Calu3 (cell line): ENCODE measurements at regions of chr13 and their contacts with region 1.

Region 1: DNA sequence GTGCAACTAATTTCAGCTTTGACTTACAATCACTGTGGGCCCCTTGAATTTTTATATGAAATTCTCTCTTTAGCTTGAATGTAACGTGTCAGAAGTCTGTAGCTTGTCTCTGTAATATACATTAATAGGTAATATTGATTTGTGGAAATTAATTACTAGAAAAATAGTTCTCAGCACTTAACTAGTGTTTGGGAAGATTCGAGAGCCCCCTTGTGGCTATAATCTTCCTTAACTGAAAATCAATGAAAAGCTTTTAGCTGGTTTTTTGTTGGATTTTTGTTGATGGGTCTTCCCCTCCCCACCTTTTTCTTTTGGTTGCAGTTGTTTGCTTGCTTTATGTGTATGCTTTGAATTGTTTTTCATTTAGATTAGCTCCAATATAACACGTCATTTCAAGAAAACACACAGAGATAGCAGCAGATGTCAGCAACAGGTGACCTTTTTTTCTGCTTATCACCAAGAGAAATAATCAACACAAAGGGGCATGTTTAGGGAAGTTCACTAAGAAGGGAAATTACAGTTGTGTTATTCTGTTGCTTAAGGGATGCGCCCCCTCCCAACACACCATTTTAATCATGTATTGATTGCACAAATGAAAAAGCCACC is 176.8 kb downstream of the OXGR1 start:
- DNase-seq: no peak
- H3K4me3 Mint-ChIP-seq: no peak overlapping the region
- H3K27ac Mint-ChIP-seq: no peak overlapping the region
- H3K4me1 Mint-ChIP-seq: no peaks in the 10 kb centered on the region
- H3K27me3 Mint-ChIP-seq: no peaks in the 10 kb centered on the region
- CTCF ChIP-seq: no peak

Region 2: GRCh38 chr13:96141027-96141426 is 676.4 kb before region 1 on chr13:
- CTCF ChIA-PET with region 1: no interaction called
- intact Hi-C with region 1: loop called (anchors 10 kb)
- DNase-seq: no peak
- H3K4me3 Mint-ChIP-seq: no peak overlapping the region
- H3K27ac Mint-ChIP-seq: no peak overlapping the region
- H3K4me1 Mint-ChIP-seq: no peaks in the 10 kb centered on the region
- H3K27me3 Mint-ChIP-seq: no peaks in the 10 kb centered on the region
- CTCF ChIP-seq: no peak

Region 3: DNA sequence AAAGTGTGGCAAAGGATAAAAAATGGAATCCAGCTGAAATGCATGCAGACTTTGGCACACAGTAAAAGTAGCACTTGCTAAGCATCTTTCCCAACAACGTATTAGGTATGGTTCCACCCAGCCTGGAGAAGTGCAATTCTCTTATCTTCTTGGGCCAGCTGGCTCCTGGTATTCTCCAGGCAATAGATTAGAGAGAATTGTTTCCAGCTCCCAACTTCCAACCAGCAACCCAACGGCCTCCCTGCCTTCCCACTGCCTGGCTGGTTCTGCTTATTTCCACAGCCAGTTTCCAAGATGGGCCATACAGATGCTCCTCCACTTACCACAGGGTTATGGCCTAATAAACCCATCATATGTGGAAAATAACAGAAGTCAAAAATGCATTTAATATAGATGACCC is 43.4 kb after region 1 on chr13:
- CTCF ChIA-PET with region 1: no interaction called
- intact Hi-C with region 1: no loop called
- DNase-seq: no peak
- H3K4me3 Mint-ChIP-seq: no peak overlapping the region
- H3K27ac Mint-ChIP-seq: no peak overlapping the region
- H3K4me1 Mint-ChIP-seq: no peaks in the 10 kb centered on the region
- H3K27me3 Mint-ChIP-seq: peaks cover 15% of the 10 kb centered on the region
- CTCF ChIP-seq: no peak

Region 4: DNA sequence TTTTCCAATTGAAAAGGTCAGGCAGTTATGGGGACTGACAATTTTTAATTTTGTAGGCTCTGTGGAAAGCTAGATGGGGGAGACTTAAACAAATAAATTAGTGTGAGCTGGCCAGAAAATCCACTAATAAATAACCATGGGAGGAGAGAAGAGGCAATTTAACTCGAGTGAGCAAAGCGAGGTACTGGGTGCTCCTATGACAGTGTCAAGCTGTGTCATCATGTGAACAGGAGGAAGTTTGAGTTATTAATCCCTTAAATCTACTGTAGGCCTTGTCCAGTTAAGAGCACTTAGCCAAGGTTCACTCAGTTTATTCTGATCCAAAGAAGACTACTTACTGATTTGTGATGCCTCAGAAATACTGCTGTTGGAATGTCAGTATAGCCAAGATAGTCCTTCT is 54.0 kb after region 1 on chr13:
- CTCF ChIA-PET with region 1: no interaction called
- intact Hi-C with region 1: no loop called
- DNase-seq: no peak
- H3K4me3 Mint-ChIP-seq: no peak overlapping the region
- H3K27ac Mint-ChIP-seq: no peak overlapping the region
- H3K4me1 Mint-ChIP-seq: no peaks in the 10 kb centered on the region
- H3K27me3 Mint-ChIP-seq: peaks cover 47% of the 10 kb centered on the region
- CTCF ChIP-seq: no peak